ENCODE measurements at regions of chr9 and their contacts with region 1.

Region 1: DNA sequence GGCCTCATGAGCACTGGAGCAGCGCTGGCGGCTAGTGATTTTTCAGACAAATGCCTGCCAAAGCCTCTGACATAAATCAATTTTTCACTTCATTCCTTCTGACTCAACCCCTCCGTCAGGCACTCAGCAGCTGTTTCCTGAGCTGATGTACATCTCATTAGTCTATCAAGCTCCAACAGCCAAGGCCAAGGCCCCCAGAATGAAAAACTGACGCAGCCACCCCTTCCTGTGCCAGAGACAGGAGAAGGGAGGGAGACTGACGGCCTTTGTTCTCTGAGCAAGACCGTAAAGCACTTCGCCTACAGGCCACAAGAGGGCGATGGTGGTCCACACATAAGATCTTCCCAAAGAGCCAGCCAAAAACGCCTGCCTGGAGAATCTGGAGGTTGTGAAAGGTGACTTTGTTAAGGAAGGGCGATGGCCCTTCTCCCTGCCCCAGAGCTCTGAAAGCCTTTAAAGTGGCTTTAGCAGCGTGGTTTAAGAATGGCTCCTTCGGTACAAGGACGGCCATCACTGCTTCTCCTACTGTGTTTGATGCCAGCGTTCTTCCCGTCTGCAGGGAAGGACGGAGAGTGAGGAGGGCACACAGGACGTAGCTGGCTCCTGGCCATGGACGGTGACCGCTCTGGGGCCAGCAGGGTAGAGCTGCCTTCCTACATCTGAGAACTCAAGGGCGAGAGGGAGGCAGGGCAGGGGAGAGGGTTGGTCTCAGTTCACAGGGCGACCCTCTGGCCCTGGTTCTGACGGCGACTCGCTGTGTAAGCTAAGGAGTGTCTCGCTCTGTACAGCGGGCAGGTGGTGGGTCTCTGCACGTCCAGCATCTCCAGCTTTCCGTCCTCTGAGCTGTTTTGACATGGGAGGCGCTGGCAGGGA is 37.0 kb downstream of the ALG2 start:
- DNase-seq: peak; percentile 87
- H3K4me3 Mint-ChIP-seq: no peak overlapping the region
- H3K27ac Mint-ChIP-seq: no peak overlapping the region
- H3K4me1 Mint-ChIP-seq: no peaks in the 10 kb centered on the region
- H3K27me3 Mint-ChIP-seq: peaks cover 34% of the 10 kb centered on the region
- CTCF ChIP-seq: peak; percentile 91

Region 2: GRCh38 chr9:99162759-99163364 is 21.8 kb before region 1 on chr9:
- CTCF ChIA-PET with region 1: interaction called, 21 read pairs
- POLR2A ChIA-PET with region 1: no interaction called
- intact Hi-C with region 1: no loop called
- DNase-seq: peak; percentile 48
- H3K4me3 Mint-ChIP-seq: no peak overlapping the region
- H3K27ac Mint-ChIP-seq: no peak overlapping the region
- H3K4me1 Mint-ChIP-seq: no peaks in the 10 kb centered on the region
- H3K27me3 Mint-ChIP-seq: peaks cover 13% of the 10 kb centered on the region
- CTCF ChIP-seq: peak; percentile 51

Region 3: GRCh38 chr9:99197987-99198386 is 13.3 kb after region 1 on chr9:
- CTCF ChIA-PET with region 1: interaction called, 26 read pairs
- POLR2A ChIA-PET with region 1: no interaction called
- intact Hi-C with region 1: no loop called
- DNase-seq: no peak
- H3K4me3 Mint-ChIP-seq: no peak overlapping the region
- H3K27ac Mint-ChIP-seq: no peak overlapping the region
- H3K4me1 Mint-ChIP-seq: no peaks in the 10 kb centered on the region
- H3K27me3 Mint-ChIP-seq: peaks cover 41% of the 10 kb centered on the region
- CTCF ChIP-seq: no peak

Region 4: DNA sequence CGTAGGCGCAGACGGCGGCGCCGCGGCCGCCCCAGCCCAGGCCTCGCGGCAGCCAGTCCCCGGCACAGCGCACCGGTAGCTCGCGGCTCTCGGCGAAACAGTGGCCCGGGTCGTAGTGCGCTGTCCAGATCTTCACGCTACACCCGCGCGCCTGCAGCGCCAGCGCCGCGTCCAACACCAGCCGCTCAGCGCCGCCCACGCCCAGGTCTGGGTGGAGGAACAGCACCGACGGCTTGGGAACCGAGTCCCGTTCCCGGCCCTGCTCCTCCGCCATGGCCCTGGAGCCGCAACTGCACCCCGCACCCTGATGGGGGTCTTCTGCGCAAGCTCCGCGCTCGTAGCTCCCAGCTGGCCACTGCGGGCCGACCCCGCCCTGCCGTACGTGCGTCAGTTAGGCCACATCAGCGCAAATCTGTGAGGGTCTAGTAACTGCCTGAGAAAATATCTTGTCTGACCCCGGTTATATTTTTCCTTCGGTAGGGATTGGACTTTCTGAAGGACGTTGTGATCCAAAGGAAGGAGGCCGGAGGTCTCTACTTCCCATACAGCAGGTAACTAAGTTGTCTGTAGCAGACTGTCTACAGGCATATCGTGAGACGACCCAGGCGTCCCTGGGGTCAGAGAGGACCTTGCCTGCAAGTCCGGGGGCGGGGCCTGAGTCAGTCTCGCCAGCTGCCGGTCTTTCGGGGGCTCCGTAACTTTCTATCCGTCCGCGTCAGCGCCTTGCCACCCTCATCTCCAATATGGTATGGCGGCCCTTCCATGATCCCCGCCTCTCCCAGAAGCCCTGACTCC is 37.1 kb after region 1 on chr9 and contains the starts of genes ALG2 and SEC61B:
- CTCF ChIA-PET with region 1: interaction called, 33 read pairs
- POLR2A ChIA-PET with region 1: interaction called, 5 read pairs
- intact Hi-C with region 1: no loop called
- DNase-seq: peak; percentile 92
- H3K4me3 Mint-ChIP-seq: peak within 1 kb of the TSS; percentile 98
- H3K27ac Mint-ChIP-seq: peak within 1 kb of the TSS; percentile 100
- H3K4me1 Mint-ChIP-seq: peaks cover 50% of the 10 kb centered on the region
- H3K27me3 Mint-ChIP-seq: no peaks in the 10 kb centered on the region
- CTCF ChIP-seq: no peak
- total RNA-seq, gene ALG2: 54.6 and 54.7 TPM in 2 replicates
- total RNA-seq, gene SEC61B: 238 and 324 TPM in 2 replicates

Region 5: DNA sequence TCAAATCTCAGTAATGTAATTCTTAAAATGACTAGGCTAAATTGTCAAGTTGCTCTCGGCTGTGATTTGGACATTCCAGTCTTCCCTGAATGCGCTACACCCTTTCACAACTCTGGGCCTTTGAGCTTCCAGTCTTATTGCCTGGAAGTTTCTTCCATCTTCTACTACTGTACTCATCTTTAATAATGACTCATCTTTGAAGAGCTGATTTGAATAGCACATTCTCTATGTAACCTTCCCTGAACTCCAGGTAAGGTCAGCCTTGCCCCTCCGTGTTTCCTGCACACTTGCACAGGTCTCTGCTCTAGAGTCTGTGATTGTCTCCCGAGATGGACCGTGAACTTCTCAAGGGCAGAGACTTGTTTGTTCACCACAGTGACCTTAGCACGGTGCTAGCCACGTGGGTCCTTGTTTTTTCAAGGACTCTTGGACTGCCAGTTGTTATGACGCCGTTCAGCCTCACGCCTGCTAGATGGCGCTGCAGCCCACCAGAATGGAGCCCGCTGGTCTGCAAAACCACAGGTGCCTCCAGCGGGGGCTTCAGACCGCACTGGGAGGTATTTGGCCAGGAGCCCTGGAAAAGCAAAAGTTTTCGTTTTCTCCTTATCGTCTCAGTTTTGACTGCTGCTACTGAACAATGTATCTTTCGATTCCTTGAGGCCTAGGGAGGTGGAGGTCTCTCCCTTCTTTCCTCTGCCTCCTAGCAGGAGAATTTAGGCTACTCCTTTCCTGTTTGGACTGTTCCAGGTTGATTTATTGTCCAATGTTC is 81.7 kb after region 1 on chr9:
- CTCF ChIA-PET with region 1: interaction called, 7 read pairs
- POLR2A ChIA-PET with region 1: no interaction called
- intact Hi-C with region 1: loop called (anchors 10 kb)
- DNase-seq: peak; percentile 72
- H3K4me3 Mint-ChIP-seq: peak overlapping the region; percentile 37
- H3K27ac Mint-ChIP-seq: no peak overlapping the region
- H3K4me1 Mint-ChIP-seq: peaks cover 19% of the 10 kb centered on the region
- H3K27me3 Mint-ChIP-seq: peaks cover 16% of the 10 kb centered on the region
- CTCF ChIP-seq: peak; percentile 83

Region 6: GRCh38 chr9:99732715-99733114 is 548.0 kb after region 1 on chr9:
- CTCF ChIA-PET with region 1: no interaction called
- POLR2A ChIA-PET with region 1: no interaction called
- intact Hi-C with region 1: no loop called
- DNase-seq: peak; percentile 13
- H3K4me3 Mint-ChIP-seq: no peak overlapping the region
- H3K27ac Mint-ChIP-seq: no peak overlapping the region
- H3K4me1 Mint-ChIP-seq: no peaks in the 10 kb centered on the region
- H3K27me3 Mint-ChIP-seq: peaks cover 9% of the 10 kb centered on the region
- CTCF ChIP-seq: no peak

Region 7: GRCh38 chr9:100028201-100028784 is 843.6 kb after region 1 on chr9:
- CTCF ChIA-PET with region 1: interaction called, 3 read pairs
- POLR2A ChIA-PET with region 1: no interaction called
- intact Hi-C with region 1: loop called (anchors 10 kb)
- DNase-seq: peak; percentile 77
- H3K4me3 Mint-ChIP-seq: no peak overlapping the region
- H3K27ac Mint-ChIP-seq: no peak overlapping the region
- H3K4me1 Mint-ChIP-seq: no peaks in the 10 kb centered on the region
- H3K27me3 Mint-ChIP-seq: no peaks in the 10 kb centered on the region
- CTCF ChIP-seq: peak; percentile 85

Region 8: DNA sequence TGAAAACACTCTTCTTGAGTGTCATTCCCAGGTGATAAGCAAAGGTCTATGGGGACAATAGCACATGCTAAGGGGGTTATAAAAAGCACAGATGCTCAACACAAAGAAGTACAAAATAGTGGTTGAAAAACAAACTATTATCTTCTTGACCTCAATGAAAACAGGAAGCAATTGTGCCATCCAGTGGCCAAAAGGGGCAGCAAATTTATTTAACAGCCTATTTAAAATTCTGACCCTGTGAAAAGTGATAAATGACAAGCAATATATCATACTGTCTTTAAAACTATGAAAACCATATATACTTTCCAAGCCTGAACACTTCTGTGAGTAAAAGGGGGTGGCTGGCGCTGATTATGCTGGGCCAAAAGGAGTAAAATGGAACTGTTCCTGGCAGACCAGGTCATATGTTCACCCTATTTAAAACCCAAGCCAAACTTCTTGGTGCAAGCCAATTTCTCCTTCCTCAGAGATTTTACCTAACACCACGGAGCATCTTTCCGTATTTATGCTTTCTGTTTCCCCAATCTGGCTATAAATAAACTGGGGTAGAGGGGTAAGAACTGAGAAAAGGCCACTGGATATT is 1138.3 kb after region 1 on chr9:
- CTCF ChIA-PET with region 1: interaction called, 6 read pairs
- POLR2A ChIA-PET with region 1: no interaction called
- intact Hi-C with region 1: loop called (anchors 1 kb)
- DNase-seq: peak; percentile 46
- H3K4me3 Mint-ChIP-seq: no peak overlapping the region
- H3K27ac Mint-ChIP-seq: no peak overlapping the region
- H3K4me1 Mint-ChIP-seq: peaks cover 3% of the 10 kb centered on the region
- H3K27me3 Mint-ChIP-seq: no peaks in the 10 kb centered on the region
- CTCF ChIP-seq: peak; percentile 27

Measured in MCF 10A (cell line).